HEK293 (cell line): ENCODE measurements at regions of chr10 and their contacts with region 1.

Region 1: DNA sequence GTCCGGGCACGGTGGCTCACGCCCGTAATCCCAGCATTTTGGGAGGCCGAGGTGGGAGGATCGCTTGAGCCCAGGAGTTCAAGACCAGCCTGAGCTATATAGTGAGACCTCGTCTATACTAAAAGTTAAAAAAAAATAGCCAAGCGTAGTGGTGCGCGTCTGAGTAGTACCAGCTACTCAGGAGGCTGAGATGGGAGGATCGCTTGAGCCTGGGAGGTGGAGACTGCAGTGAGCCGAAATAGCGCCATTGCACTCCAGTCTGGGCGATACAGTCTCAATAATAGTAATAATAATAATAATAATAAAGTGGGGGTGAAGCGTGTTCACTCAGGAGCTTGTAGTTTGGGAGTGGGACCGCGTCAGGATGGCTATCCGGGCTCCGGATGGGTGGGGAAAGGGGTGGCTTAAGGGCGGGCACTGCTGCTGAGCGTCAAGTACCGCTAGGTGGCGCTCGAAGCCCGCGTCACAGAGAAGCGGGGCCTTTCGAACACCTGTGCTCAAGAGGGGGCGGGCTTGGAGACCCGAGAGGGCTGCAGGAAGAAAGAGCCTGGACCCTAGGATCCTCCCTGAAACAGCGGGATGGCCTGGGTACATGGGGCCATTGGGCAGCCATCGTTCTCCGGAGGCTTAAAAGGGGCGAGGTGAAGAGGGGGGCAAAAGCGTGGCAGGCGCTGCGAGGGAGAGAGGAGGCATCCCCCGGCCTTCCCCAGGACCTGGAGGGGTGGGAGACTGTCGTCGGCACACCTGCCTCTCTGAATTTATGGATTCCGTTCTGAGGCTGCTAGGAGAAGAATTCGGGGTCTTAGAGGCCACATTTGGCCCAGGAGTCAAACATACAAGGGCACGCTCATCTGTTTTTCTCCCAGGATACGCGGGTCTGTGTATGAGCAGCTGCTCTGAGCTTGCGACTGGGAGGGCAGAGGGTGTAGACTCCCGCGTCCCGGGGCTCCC is 14.5 kb downstream of the LBX1 start:
- H3K4me3 ChIP-seq: no peak overlapping the region
- H3K27ac ChIP-seq: no peak overlapping the region
- H3K4me1 ChIP-seq: no peaks in the 10 kb centered on the region; the same call in 1 of the 2 replicates
- CTCF ChIP-seq: peak; percentile 94

Region 2: DNA sequence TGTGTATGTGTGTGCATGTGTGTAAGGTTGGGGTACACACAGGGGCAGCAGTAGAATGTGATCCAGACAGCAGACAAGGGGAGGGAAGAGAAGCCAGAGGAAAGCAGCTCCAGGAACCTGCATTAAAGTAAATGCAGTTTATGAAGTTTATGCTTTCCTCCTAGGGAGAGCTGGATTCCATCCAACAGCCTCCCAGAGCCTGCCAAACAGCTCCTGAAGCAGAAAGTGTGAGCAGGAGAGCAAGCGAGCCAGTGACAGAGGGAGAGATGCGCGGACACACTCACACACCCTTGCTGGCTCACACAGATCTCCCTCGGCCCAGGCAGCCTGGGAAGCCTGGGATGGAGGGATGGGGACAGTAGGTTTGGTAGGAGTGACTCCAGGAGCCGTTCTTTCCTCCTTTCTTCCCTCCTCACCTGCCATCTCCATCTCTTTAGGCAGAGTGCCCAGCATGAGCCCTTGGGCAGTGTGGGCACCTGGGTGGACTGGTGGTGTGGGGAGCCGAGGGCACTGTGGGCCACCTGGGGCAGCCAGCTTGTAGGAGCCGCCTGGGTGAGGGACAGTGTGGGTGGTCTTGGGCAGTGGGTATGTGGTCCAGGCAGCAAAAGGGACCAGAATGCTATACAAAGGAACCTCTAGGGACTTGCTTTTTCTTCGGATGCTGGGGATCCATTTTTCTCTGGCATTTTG is 423.2 kb before region 1 on chr10:
- CTCF ChIA-PET with region 1: no interaction called
- POLR2A ChIA-PET with region 1: no interaction called
- H3K4me3 ChIP-seq: no peak overlapping the region
- H3K27ac ChIP-seq: no peak overlapping the region
- H3K4me1 ChIP-seq: no peaks in the 10 kb centered on the region
- CTCF ChIP-seq: no peak

Region 3: GRCh38 chr10:100819424-100819823 is 395.3 kb before region 1 on chr10:
- CTCF ChIA-PET with region 1: no interaction called
- POLR2A ChIA-PET with region 1: no interaction called
- H3K4me3 ChIP-seq: no peak overlapping the region
- H3K27ac ChIP-seq: no peak overlapping the region
- H3K4me1 ChIP-seq: no peaks in the 10 kb centered on the region
- CTCF ChIP-seq: no peak

Region 4: DNA sequence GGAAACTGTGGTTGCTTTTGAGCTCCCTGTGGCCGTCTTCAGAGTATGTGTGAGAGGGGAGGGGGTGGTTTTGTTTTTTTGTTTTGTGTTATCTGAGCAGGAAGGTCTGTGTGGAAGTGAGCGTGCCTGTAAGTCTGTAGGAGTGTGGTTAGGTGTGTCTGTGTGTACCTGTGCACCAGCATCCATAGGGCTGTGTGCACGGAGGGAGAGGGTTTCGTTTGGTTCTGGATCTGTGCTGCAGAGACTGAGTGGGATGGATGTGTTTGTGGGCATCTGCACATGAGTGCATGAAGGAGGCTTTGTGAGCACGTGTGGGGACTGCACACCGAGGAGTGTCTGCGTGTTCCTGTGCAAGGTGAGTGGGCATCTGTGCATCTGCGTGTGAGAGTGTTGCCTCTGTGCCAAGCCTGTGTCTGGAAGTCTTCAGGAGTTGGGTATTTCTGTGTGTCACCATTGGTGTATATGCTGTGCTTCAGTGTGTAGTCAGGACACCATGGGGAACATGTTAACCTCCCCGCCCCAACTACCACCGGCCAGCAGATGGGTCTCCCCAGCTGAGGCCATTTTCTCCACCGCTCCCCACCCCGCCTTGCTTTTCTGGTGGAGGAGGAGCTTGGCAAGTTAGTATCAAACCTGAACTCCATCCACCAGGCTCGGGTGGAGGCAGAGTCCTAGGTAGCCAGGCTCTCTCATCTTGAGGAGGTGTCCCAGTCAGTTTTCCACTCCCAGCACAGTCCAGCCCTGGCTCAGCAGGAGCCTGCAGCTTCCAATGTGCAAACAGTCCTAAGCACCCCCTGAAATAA is 90.7 kb before region 1 on chr10:
- CTCF ChIA-PET with region 1: no interaction called
- POLR2A ChIA-PET with region 1: no interaction called
- H3K4me3 ChIP-seq: no peak overlapping the region
- H3K27ac ChIP-seq: no peak overlapping the region
- H3K4me1 ChIP-seq: no peaks in the 10 kb centered on the region
- CTCF ChIP-seq: no peak

Region 5: GRCh38 chr10:101233863-101234262 is 19.1 kb after region 1 on chr10:
- CTCF ChIA-PET with region 1: interaction called, 19 read pairs
- POLR2A ChIA-PET with region 1: no interaction called
- H3K4me3 ChIP-seq: no peak overlapping the region
- H3K27ac ChIP-seq: no peak overlapping the region
- H3K4me1 ChIP-seq: peaks cover 9% of the 10 kb centered on the region
- CTCF ChIP-seq: no peak

Region 6: DNA sequence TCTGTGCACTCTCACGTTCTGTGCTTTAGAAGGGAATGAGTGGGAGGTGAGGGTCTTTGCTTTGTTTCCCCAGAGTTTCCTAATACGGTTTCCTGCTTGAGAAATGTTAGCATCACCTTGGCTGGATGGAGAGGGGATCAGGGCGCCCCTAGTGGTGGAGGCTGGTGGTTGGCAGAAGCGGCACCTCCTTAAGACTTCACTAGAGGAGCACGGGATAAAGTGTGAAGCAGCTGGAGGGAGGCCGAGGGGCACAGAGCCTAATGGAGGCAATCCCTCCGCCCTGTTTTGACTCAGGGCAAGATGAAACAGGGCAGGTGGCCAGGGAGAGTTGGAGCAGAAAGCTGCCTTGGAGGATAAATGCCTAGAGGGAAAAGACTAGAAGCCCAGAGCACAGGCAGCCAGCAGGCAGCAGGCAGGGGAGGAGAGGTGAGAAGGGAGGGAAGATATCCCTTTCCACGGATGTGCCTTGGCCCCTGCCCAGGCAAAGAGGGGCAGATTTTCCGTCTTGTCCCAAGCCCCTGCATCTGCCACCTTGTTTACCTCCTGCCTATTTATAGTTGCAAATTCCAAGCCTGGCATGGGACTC is 83.3 kb after region 1 on chr10:
- CTCF ChIA-PET with region 1: interaction called, 112 read pairs
- POLR2A ChIA-PET with region 1: interaction called, 4 read pairs
- H3K4me3 ChIP-seq: no peak overlapping the region
- H3K27ac ChIP-seq: no peak overlapping the region
- H3K4me1 ChIP-seq: no peaks in the 10 kb centered on the region
- CTCF ChIP-seq: peak; percentile 89

Region 7: GRCh38 chr10:101441541-101442455 is 227.1 kb after region 1 on chr10:
- CTCF ChIA-PET with region 1: interaction called, 92 read pairs
- POLR2A ChIA-PET with region 1: no interaction called
- H3K4me3 ChIP-seq: no peak overlapping the region
- H3K27ac ChIP-seq: no peak overlapping the region
- H3K4me1 ChIP-seq: peaks cover 26% of the 10 kb centered on the region
- CTCF ChIP-seq: peak; percentile 94

Region 8: GRCh38 chr10:101545898-101546297 is 331.2 kb after region 1 on chr10:
- CTCF ChIA-PET with region 1: interaction called, 10 read pairs
- POLR2A ChIA-PET with region 1: no interaction called
- H3K4me3 ChIP-seq: no peak overlapping the region
- H3K27ac ChIP-seq: no peak overlapping the region
- H3K4me1 ChIP-seq: 0 out of 2 replicates have a peak, but pooled peaks cover 3% of the 10 kb centered on the region
- CTCF ChIP-seq: no peak

Region 9: GRCh38 chr10:101602761-101603398 is 388.2 kb after region 1 on chr10:
- CTCF ChIA-PET with region 1: interaction called, 11 read pairs
- POLR2A ChIA-PET with region 1: no interaction called
- H3K4me3 ChIP-seq: no peak overlapping the region
- H3K27ac ChIP-seq: no peak overlapping the region
- H3K4me1 ChIP-seq: no peaks in the 10 kb centered on the region
- CTCF ChIP-seq: peak; percentile 98